Calu3 (cell line): ENCODE measurements at regions of chr7 and their contacts with region 1.

Region 1: DNA sequence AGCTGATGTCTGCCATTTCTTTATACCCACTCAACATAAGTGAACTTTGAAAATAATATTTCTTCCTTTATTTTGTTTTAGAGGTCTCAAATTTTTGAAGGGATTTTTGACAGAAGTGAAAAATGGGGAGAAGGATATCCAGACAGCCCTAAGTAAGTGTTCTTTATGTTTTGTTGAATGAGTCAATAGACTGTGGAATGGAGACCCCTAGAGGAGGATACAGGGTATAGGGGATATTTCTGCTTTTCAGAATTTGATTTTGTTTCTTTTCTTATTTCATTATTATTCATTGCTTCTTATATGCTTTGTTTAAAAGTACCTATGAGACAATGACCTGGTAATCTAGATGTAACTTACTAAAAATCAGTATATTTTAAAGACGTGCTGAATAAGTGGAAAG is 34.4 kb downstream of the PLEKHA8 start:
- DNase-seq: no peak
- H3K4me3 Mint-ChIP-seq: no peak overlapping the region
- H3K27ac Mint-ChIP-seq: no peak overlapping the region
- H3K4me1 Mint-ChIP-seq: no peaks in the 10 kb centered on the region
- H3K27me3 Mint-ChIP-seq: no peaks in the 10 kb centered on the region
- CTCF ChIP-seq: peak; percentile 49

Region 2: GRCh38 chr7:28939844-28940544 is 1122.6 kb before region 1 on chr7:
- CTCF ChIA-PET with region 1: no interaction called
- intact Hi-C with region 1: no loop called
- DNase-seq: no peak
- H3K4me3 Mint-ChIP-seq: no peak overlapping the region
- H3K27ac Mint-ChIP-seq: no peak overlapping the region
- H3K4me1 Mint-ChIP-seq: no peaks in the 10 kb centered on the region
- H3K27me3 Mint-ChIP-seq: no peaks in the 10 kb centered on the region
- CTCF ChIP-seq: no peak

Region 3: DNA sequence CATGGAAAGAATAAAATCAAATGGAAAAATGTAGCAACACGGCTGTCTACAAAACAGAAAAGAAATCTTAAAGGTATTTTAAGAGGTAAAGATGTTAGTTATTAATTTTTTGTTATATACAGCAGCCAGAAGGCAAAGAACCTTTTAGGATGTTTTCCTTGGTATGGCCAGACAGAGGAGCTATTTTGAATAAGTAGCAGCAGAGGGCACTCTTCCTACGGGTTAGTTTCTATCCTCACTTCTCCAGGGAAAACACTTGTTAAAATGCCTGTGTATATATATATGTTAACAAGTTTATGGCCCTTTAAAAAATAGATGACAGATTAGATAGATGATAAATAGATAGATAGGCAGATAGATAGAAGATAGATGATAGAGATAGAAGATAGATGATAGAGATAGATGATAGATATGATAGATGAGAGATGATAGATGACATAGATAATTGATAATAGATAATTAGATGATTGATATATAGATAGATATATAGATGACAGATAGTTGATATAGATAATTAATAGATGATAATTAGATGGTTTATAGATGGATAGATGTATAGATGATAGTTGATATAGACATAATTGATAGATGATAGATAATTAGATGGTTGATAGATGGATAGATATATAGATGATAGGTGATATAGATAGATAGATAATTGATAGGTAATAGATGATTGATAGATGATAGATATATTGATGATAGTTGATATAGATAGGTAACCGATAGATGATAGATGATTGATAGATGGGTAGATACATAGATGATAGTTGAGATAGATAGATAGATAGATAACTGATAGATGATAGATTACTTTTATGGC is 314.1 kb before region 1 on chr7:
- CTCF ChIA-PET with region 1: interaction called, 12 read pairs
- intact Hi-C with region 1: loop called (anchors 5 kb)
- DNase-seq: peak; percentile 22
- H3K4me3 Mint-ChIP-seq: no peak overlapping the region
- H3K27ac Mint-ChIP-seq: no peak overlapping the region
- H3K4me1 Mint-ChIP-seq: peaks cover 14% of the 10 kb centered on the region
- H3K27me3 Mint-ChIP-seq: peaks cover 20% of the 10 kb centered on the region
- CTCF ChIP-seq: peak; percentile 19

Region 4: GRCh38 chr7:29946428-29947186 is 116.0 kb before region 1 on chr7:
- CTCF ChIA-PET with region 1: interaction called, 4 read pairs
- intact Hi-C with region 1: loop called (anchors 2 kb)
- DNase-seq: peak; percentile 55
- H3K4me3 Mint-ChIP-seq: no peak overlapping the region
- H3K27ac Mint-ChIP-seq: no peak overlapping the region
- H3K4me1 Mint-ChIP-seq: peaks cover 10% of the 10 kb centered on the region
- H3K27me3 Mint-ChIP-seq: no peaks in the 10 kb centered on the region
- CTCF ChIP-seq: peak; percentile 23

Region 5: GRCh38 chr7:29957521-29958310 is 104.9 kb before region 1 on chr7:
- CTCF ChIA-PET with region 1: no interaction called
- intact Hi-C with region 1: no loop called
- DNase-seq: no peak
- H3K4me3 Mint-ChIP-seq: no peak overlapping the region
- H3K27ac Mint-ChIP-seq: no peak overlapping the region
- H3K4me1 Mint-ChIP-seq: no peaks in the 10 kb centered on the region
- H3K27me3 Mint-ChIP-seq: no peaks in the 10 kb centered on the region
- CTCF ChIP-seq: no peak

Region 6: DNA sequence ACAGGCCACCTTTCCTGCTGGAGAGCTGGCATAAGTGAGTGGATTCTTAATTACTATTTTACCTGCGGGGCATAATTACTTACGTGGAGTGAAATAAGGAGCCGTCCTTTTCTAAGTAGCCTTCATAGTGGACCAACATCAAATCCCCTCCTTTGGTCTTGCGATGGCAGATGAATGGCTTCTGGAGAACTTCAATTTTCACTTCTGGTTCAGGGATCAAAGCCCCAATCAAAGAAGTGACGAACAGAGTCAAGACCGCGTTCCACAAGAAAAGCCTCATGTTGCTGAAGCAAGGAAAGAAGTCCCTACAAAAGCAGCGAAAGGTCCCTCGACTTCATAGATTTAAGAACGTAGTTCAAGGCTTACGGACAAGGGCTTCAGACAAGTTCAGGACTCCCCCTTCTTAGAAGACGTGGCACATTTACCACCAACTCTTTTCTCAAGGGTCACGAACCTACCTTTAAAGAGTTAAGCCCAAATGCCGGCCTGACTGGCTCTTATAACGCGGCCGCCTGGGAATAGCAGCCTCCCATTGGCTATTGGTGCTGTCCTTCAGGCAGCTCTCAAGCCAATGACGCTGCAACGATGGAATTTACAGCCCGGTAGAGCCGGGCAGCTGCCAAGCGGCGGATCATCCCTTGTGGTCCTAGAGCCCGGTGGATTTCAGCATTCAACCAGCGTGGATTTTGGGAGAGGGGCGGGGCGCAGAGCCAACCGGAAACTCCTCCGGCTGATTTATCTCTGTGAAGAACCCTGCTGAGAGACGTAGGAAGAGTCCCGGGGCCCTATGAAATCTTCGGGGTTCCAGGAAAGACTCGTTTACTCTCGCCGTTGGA is 36.1 kb before region 1 on chr7 and contains the start of gene FKBP14:
- CTCF ChIA-PET with region 1: interaction called, 11 read pairs
- intact Hi-C with region 1: loop called (anchors 1 kb)
- DNase-seq: peak; percentile 99
- H3K4me3 Mint-ChIP-seq: no peak within 1 kb of the TSS
- H3K27ac Mint-ChIP-seq: peak within 1 kb of the TSS; percentile 67
- H3K4me1 Mint-ChIP-seq: peaks cover 30% of the 10 kb centered on the region
- H3K27me3 Mint-ChIP-seq: no peaks in the 10 kb centered on the region
- CTCF ChIP-seq: no peak
- total RNA-seq, gene FKBP14: 26.2 and 30.5 TPM in 2 replicates